Mammary epithelial cell (primary cell): ENCODE measurements at regions of chr17 and their contacts with region 1.

Region 1: GRCh38 chr17:39927101-39927928 is at the starts of genes LRRC3C and ORMDL3:
- DNase-seq: peak; percentile 89
- H3K4me3 ChIP-seq: peak within 1 kb of the TSS; percentile 74 to 85 (median 84)
- H3K27ac ChIP-seq: peak within 1 kb of the TSS; percentile 49
- H3K4me1 ChIP-seq: peaks cover 25% of the 10 kb centered on the region
- H3K27me3 ChIP-seq: no peaks in the 10 kb centered on the region
- CTCF ChIP-seq: no peak
- total RNA-seq, gene LRRC3C: not detected
- total RNA-seq, gene ORMDL3: 36.2 to 53.3 TPM

Region 2: GRCh38 chr17:39704821-39705551 is 222.3 kb before region 1 on chr17:
- CTCF ChIA-PET with region 1: no interaction called
- dilution Hi-C with region 1: no loop called
- in situ Hi-C with region 1: no loop called
- intact Hi-C with region 1: no loop called
- DNase-seq: no peak
- H3K4me3 ChIP-seq: no peak overlapping the region
- H3K27ac ChIP-seq: peak overlapping the region; percentile 44
- H3K4me1 ChIP-seq: peaks cover 40% of the 10 kb centered on the region
- H3K27me3 ChIP-seq: no peaks in the 10 kb centered on the region
- CTCF ChIP-seq: peak; percentile 14 to 42

Region 3: DNA sequence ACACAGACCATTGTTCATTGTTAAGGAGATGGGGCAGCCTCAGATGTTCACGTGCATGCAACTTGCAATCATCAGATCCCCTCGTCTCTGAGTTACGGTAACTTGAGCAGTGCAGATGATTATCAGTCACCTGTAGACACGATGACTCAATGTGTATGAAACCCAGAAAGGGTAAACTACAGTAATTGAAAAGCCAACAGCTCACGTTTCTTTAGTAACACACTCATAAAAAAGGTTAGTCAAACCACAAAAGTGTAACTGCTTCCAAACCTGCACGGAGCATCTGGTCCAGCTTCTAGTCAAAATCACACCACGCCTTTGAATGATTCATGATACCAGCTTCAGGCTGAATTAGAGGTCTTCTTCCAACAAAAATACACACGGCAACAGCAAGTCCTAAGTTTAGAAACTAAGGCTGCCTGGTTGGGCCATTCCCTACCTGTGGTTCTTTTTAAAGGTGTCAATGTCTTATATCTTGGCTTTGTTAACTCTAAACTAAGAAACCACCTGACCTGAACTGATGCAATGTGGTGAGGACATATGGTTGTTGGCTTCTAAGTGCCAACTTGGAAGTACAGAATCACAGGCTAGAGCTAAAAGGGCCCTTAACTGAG is 157.2 kb before region 1 on chr17:
- CTCF ChIA-PET with region 1: no interaction called
- dilution Hi-C with region 1: no loop called
- in situ Hi-C with region 1: no loop called
- intact Hi-C with region 1: loop called (anchors 5 kb)
- DNase-seq: peak; percentile 100
- H3K4me3 ChIP-seq: no peak overlapping the region
- H3K27ac ChIP-seq: no peak overlapping the region
- H3K4me1 ChIP-seq: peaks cover 17% of the 10 kb centered on the region
- H3K27me3 ChIP-seq: peaks cover 60% of the 10 kb centered on the region
- CTCF ChIP-seq: no peak

Region 4: DNA sequence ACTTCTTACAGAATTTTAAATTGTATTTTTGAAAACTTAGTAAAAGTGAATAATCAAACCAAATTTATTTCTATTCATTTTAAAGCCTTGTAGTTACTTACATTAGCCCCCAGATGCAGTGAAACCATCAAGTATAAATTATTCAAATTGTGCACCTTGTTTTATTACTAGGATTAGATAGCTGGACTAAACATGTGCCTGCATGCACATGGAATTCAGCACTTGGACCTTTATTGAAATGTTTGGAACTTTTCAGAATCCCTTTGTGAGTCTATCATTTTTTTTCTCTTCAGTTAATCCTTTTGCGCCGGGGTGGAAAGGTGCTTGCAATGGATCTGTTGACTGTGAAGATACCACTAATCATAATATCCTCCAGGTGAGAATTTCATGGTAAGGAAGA is 54.6 kb before region 1 on chr17:
- CTCF ChIA-PET with region 1: no interaction called
- dilution Hi-C with region 1: no loop called
- in situ Hi-C with region 1: no loop called
- intact Hi-C with region 1: loop called (anchors 10 kb)
- DNase-seq: peak; percentile 32
- H3K4me3 ChIP-seq: no peak overlapping the region
- H3K27ac ChIP-seq: no peak overlapping the region
- H3K4me1 ChIP-seq: peaks cover 5% of the 10 kb centered on the region
- H3K27me3 ChIP-seq: peaks cover 8% of the 10 kb centered on the region
- CTCF ChIP-seq: peak; percentile 51 to 62

Region 5: DNA sequence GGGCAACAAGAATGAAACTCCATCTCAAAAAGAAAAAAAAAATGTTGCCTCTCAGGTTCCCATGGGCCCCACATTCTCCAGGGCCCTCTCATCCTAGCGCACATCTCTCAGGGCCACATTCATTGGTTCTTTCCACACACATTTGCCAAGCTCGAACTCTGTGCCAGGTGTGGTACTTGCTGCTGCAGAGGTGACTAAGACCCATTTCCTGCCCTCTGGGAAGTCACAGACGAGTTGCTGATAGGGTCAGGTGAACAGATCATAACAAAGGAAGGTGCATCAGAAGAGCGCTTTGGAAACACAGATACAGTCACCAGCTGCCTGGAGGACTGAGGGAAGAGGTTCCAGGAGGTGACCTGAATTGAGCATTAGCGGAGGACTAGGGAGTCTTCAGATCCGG is 36.5 kb after region 1 on chr17:
- CTCF ChIA-PET with region 1: no interaction called
- dilution Hi-C with region 1: no loop called
- in situ Hi-C with region 1: no loop called
- intact Hi-C with region 1: loop called (anchors 1 kb)
- DNase-seq: peak; percentile 93
- H3K4me3 ChIP-seq: no peak overlapping the region
- H3K27ac ChIP-seq: no peak overlapping the region
- H3K4me1 ChIP-seq: peaks cover 25% of the 10 kb centered on the region
- H3K27me3 ChIP-seq: no peaks in the 10 kb centered on the region
- CTCF ChIP-seq: no peak

Region 6: DNA sequence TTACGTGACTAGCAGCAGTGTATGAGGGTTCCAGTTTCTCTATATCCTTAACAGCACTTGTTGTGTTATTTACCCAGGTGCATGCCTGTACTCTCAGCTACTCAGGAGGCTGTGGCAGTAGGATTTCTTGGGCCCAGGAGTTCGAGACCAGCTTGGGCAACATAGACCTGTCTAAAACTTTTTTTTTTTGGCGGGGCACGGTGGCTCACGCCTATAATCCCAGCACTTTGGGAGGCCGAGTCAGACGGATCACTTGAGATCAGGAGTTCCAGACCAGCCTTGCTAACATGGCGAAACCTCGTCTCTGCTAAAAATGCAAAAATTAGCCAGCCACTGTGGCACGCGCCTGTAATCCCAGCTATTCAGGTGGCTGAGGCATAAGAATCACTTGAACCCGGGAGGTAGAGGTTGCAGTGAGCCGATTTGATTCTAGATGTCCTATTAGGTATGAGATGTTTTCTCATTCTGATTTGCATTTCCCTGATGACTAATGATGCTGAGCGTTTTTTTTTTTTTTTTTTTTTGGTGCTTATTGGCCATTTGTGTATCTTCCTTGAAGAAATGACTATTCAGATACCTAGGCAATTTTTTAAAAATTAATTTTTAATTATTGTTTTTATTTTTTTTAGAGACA is 226.4 kb after region 1 on chr17:
- CTCF ChIA-PET with region 1: no interaction called
- dilution Hi-C with region 1: no loop called
- in situ Hi-C with region 1: no loop called
- intact Hi-C with region 1: no loop called
- DNase-seq: no peak
- H3K4me3 ChIP-seq: no peak overlapping the region
- H3K27ac ChIP-seq: no peak overlapping the region
- H3K4me1 ChIP-seq: no peaks in the 10 kb centered on the region
- H3K27me3 ChIP-seq: no peaks in the 10 kb centered on the region
- CTCF ChIP-seq: no peak

Region 7: GRCh38 chr17:40177275-40177874 is 250.1 kb after region 1 on chr17 and contains the start of gene RAPGEFL1:
- CTCF ChIA-PET with region 1: no interaction called
- dilution Hi-C with region 1: no loop called
- in situ Hi-C with region 1: no loop called
- intact Hi-C with region 1: no loop called
- DNase-seq: peak; percentile 73
- H3K4me3 ChIP-seq: peak within 1 kb of the TSS; percentile 60 to 80 (median 65)
- H3K27ac ChIP-seq: peak within 1 kb of the TSS; percentile 85
- H3K4me1 ChIP-seq: peaks cover 47% of the 10 kb centered on the region
- H3K27me3 ChIP-seq: no peaks in the 10 kb centered on the region
- CTCF ChIP-seq: no peak
- total RNA-seq, gene RAPGEFL1: 19.7 to 25.2 TPM